Activated CD4-positive, alpha-beta memory T cell treated with anti-CD3 and anti-CD28 coated beads, Interleukin-2, amount 10 ng/mL, durations not matched to agents 7 days and 5 days (primary cell): ENCODE measurements at regions of chr10 and their contacts with region 1.

Region 1: GRCh38 chr10:70461215-70461986 is 17.2 kb upstream of the PALD1 start:
- DNase-seq: peak; percentile 53
- H3K4me3 Mint-ChIP-seq: no peak overlapping the region
- H3K27ac Mint-ChIP-seq: no peak overlapping the region
- H3K4me1 Mint-ChIP-seq: no peaks in the 10 kb centered on the region
- H3K27me3 Mint-ChIP-seq: peaks cover 41% of the 10 kb centered on the region

Region 2: DNA sequence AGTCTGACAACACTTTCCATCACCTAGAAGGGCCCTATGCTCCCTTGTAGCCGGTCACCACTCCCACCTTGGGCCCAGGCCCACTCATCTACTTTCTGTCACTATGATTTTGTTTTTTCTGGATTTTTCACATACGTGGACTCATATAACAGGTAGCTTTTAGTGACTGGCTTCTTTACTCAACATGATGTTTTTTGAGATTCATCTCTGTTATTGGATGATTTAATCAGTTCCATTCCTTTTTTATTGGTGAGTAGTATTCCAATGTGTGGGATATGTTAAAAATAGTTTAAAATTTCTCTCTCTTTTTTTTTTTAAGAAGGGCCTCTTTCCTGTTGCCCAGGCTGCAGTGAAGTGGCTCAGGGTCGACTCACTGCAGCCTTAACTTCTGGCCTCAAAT is 26.4 kb after region 1 on chr10:
- CTCF ChIA-PET with region 1: no interaction called
- POLR2A ChIA-PET with region 1: no interaction called
- DNase-seq: no peak
- H3K4me3 Mint-ChIP-seq: no peak overlapping the region
- H3K27ac Mint-ChIP-seq: no peak overlapping the region
- H3K4me1 Mint-ChIP-seq: no peaks in the 10 kb centered on the region
- H3K27me3 Mint-ChIP-seq: peaks cover 7% of the 10 kb centered on the region

Region 3: GRCh38 chr10:70537344-70538209 is 76.2 kb after region 1 on chr10:
- CTCF ChIA-PET with region 1: interaction called, 12 read pairs
- POLR2A ChIA-PET with region 1: interaction called, 3 read pairs
- DNase-seq: no peak
- H3K4me3 Mint-ChIP-seq: no peak overlapping the region
- H3K27ac Mint-ChIP-seq: no peak overlapping the region
- H3K4me1 Mint-ChIP-seq: no peaks in the 10 kb centered on the region
- H3K27me3 Mint-ChIP-seq: no peaks in the 10 kb centered on the region